Vagina (tissue), 2 donors: ENCODE measurements at regions of chr3 and their contacts with region 1.

Region 1: GRCh38 chr3:169764452-169765274 is at the start of gene TERC:
- DNase-seq: peak in 1 of 2 donors; percentile 96
- H3K4me3 ChIP-seq: peak within 1 kb of the TSS; percentile 77 to 79
- H3K27ac ChIP-seq: peak within 1 kb of the TSS; percentile 92
- H3K4me1 ChIP-seq: peaks cover 15% of the 10 kb centered on the region
- H3K27me3 ChIP-seq: no peaks in the 10 kb centered on the region
- CTCF ChIP-seq: no peak
- POLR2A ChIP-seq: peak in 1 of 2 donors; percentile 98
- total RNA-seq, gene TERC: 204 TPM

Region 2: GRCh38 chr3:169668957-169669681 is 95.5 kb before region 1 on chr3:
- intact Hi-C with region 1: loop called (anchors 10 kb)
- DNase-seq: no peak
- H3K4me3 ChIP-seq: peak overlapping the region; percentile 43 to 44
- H3K27ac ChIP-seq: peak overlapping the region; percentile 44
- H3K4me1 ChIP-seq: peaks cover 15% of the 10 kb centered on the region
- H3K27me3 ChIP-seq: no peaks in the 10 kb centered on the region
- CTCF ChIP-seq: peak in 2 of 3 experiments; percentile 25 to 53
- POLR2A ChIP-seq: no peak

Region 3: GRCh38 chr3:169827712-169828111 is 63.0 kb after region 1 on chr3:
- intact Hi-C with region 1: no loop called
- DNase-seq: no peak
- H3K4me3 ChIP-seq: no peak overlapping the region
- H3K27ac ChIP-seq: no peak overlapping the region
- H3K4me1 ChIP-seq: no peaks in the 10 kb centered on the region
- H3K27me3 ChIP-seq: no peaks in the 10 kb centered on the region
- CTCF ChIP-seq: no peak
- POLR2A ChIP-seq: no peak

Region 4: DNA sequence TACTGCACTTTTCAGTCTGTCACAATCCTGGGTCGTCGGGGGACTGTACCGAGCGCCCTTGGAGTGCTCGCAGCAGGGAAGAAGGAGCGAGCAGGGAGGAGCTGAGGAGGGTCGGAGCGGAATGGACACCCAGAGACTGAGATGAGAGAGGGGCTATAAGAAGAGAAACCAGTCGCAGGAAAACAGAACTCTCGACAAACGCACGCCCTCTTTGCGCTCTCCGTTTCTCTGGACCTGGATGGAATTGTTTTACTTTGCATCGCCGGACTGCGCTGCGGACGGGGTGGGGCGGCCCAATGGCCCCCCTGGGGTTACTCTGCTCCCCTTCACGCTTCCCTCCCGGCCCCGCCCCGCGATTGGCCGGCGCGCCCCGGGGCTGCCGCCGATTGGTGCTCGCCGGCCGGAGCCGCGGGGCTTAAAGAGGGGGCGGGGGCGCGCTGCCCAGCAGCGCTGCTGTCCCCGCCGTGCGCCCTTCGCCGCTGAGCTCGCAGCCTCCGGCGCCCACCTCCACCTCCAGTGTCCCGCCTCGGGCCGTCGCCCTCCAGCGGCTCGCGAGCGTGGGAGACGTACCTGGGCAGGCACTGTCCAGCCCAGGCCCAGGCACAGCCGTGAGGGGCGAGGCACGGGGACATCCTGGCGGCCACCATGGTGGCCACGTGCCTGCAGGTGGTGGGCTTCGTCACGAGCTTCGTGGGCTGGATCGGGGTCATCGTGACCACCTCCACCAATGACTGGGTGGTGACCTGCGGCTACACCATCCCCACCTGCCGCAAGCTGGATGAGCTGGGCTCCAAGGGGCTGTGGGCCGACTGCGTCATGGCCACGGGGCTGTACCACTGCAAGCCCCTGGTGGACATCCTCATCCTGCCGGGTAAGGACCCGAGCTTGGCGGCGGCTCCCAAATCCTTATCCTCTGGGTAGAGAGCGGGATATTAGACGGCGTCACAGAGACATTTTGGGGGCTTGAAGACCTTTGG is 654.0 kb after region 1 on chr3 and contains the start of gene CLDN11:
- intact Hi-C with region 1: loop called (anchors 5 kb)
- DNase-seq: no peak
- H3K4me3 ChIP-seq: peak within 1 kb of the TSS; percentile 52 to 58
- H3K27ac ChIP-seq: peak within 1 kb of the TSS; percentile 68
- H3K4me1 ChIP-seq: peaks cover 29% of the 10 kb centered on the region
- H3K27me3 ChIP-seq: no peaks in the 10 kb centered on the region
- CTCF ChIP-seq: no peak
- POLR2A ChIP-seq: peak in 1 of 2 donors; percentile 71
- total RNA-seq, gene CLDN11: 136 TPM